CD4-positive, alpha-beta T cell (primary cell): ENCODE measurements at regions of chr6 and their contacts with region 1.

Region 1: DNA sequence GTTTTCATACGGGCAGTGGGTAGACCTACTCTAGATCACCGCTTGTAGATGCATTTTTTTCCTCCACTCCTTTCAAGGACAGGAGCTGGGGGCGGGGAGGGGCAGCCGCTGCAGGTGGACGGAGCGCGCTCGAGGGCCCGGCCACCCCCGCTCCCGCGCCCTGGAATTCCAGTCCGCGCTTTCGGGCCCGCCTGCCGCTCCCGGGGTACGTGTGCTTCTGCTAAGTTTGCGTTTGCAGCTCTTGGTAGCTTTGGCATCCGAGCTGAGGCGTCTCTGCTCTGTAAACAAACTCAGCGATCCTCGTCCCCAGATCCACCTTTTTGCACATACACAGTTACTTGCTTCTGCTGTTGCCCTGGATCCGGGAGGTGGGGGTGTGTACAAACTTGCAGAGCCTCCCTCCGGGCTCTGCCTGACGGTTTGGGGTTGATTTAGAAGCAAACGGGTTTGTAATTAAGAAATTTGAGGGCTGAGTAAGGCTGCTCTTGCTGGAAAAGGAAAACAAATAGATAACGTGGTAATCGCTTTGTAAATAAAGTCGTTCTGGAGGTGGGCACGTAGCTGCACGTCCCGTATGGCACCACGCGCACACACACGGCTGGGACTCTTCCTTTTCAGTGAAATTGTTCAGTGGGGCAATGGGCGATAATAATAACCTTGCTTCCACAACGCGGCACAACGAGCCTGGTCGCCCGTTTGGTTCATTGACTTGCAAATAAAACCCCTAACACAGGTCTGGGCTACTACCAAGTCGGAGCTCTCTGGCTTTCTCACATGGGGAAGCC is 976 bp upstream of the CITED2 start:
- DNase-seq: peak; percentile 72 to 92 (median 80)
- ATAC-seq: peak; percentile 65
- H3K4me3 ChIP-seq: peak overlapping the region; percentile 71
- H3K4me3 Mint-ChIP-seq: peak overlapping the region; percentile 95
- H3K27ac ChIP-seq: peak overlapping the region; percentile 69 to 92
- H3K27ac Mint-ChIP-seq: peak overlapping the region; percentile 97
- H3K4me1 ChIP-seq: peaks cover 16% of the 10 kb centered on the region
- H3K4me1 Mint-ChIP-seq: peaks cover 28% of the 10 kb centered on the region
- H3K27me3 ChIP-seq: no peaks in the 10 kb centered on the region
- H3K27me3 Mint-ChIP-seq: no peaks in the 10 kb centered on the region
- CTCF ChIP-seq: no peak

Region 2: GRCh38 chr6:138372711-138373463 is 1002.5 kb before region 1 on chr6:
- CTCF ChIA-PET with region 1: no interaction called
- POLR2A ChIA-PET with region 1: no interaction called
- intact Hi-C with region 1: no loop called
- DNase-seq: peak in 3 of 14 experiments; percentile 20 to 30 (median 21)
- ATAC-seq: peak; percentile 49
- H3K4me3 ChIP-seq: no peak overlapping the region
- H3K4me3 Mint-ChIP-seq: no peak overlapping the region
- H3K27ac ChIP-seq: no peak overlapping the region
- H3K27ac Mint-ChIP-seq: no peak overlapping the region
- H3K4me1 ChIP-seq: no peaks in the 10 kb centered on the region
- H3K4me1 Mint-ChIP-seq: no peaks in the 10 kb centered on the region
- H3K27me3 ChIP-seq: no peaks in the 10 kb centered on the region
- H3K27me3 Mint-ChIP-seq: peaks cover 15% of the 10 kb centered on the region
- CTCF ChIP-seq: peak; percentile 23

Region 3: GRCh38 chr6:138773177-138774091 is 602.0 kb before region 1 on chr6 and contains the start of gene CCDC28A:
- CTCF ChIA-PET with region 1: interaction called, 3 read pairs
- POLR2A ChIA-PET with region 1: interaction called, 52 read pairs
- intact Hi-C with region 1: loop called (anchors 2 kb)
- DNase-seq: peak; percentile 87 to 97 (median 92)
- ATAC-seq: peak; percentile 84
- H3K4me3 ChIP-seq: peak within 1 kb of the TSS; percentile 85
- H3K4me3 Mint-ChIP-seq: peak within 1 kb of the TSS; percentile 98
- H3K27ac ChIP-seq: peak within 1 kb of the TSS; percentile 93 to 97
- H3K27ac Mint-ChIP-seq: peak within 1 kb of the TSS; percentile 98
- H3K4me1 ChIP-seq: peaks cover 11% of the 10 kb centered on the region
- H3K4me1 Mint-ChIP-seq: peaks cover 39% of the 10 kb centered on the region
- H3K27me3 ChIP-seq: no peaks in the 10 kb centered on the region
- H3K27me3 Mint-ChIP-seq: no peaks in the 10 kb centered on the region
- CTCF ChIP-seq: no peak
- total RNA-seq, gene CCDC28A: 36.9 to 37.2 TPM

Region 4: DNA sequence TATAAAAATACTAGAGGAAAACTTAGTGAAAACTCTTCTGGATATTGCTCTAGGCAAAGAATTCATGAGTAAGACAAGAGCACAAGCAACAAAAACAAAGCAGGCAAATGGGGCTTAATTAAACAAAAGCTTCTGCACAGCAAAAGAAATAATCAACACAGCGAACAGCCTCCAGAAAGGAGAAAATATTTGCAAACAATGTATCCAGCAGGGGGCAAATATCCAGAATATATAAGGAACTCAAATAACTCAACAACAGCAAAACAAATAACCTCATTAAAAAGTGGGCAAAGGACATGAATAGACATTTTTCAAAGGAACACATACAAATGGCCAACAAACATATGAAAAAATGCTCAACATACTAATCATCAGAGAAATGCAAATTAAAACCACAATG is 257.7 kb before region 1 on chr6:
- CTCF ChIA-PET with region 1: no interaction called
- POLR2A ChIA-PET with region 1: interaction called, 63 read pairs
- intact Hi-C with region 1: loop called in 1 of 2 experiments (anchors 5 kb)
- DNase-seq: no peak
- ATAC-seq: no peak
- H3K4me3 ChIP-seq: no peak overlapping the region
- H3K4me3 Mint-ChIP-seq: peak overlapping the region; percentile 13
- H3K27ac ChIP-seq: no peak overlapping the region
- H3K27ac Mint-ChIP-seq: peak overlapping the region; percentile 83
- H3K4me1 ChIP-seq: peaks cover 33% of the 10 kb centered on the region
- H3K4me1 Mint-ChIP-seq: peaks cover 53% of the 10 kb centered on the region
- H3K27me3 ChIP-seq: no peaks in the 10 kb centered on the region
- H3K27me3 Mint-ChIP-seq: no peaks in the 10 kb centered on the region
- CTCF ChIP-seq: no peak

Region 5: GRCh38 chr6:139161817-139162284 is 213.6 kb before region 1 on chr6:
- CTCF ChIA-PET with region 1: no interaction called
- POLR2A ChIA-PET with region 1: interaction called, 37 read pairs
- intact Hi-C with region 1: loop called in 1 of 2 experiments (anchors 5 kb)
- DNase-seq: peak in 13 of 14 experiments; percentile 46 to 84 (median 66)
- ATAC-seq: peak; percentile 55
- H3K4me3 ChIP-seq: peak overlapping the region; percentile 11
- H3K4me3 Mint-ChIP-seq: peak overlapping the region; percentile 76
- H3K27ac ChIP-seq: peak overlapping the region; percentile 32 to 70
- H3K27ac Mint-ChIP-seq: peak overlapping the region; percentile 84
- H3K4me1 ChIP-seq: peaks cover 94% of the 10 kb centered on the region
- H3K4me1 Mint-ChIP-seq: peaks cover 88% of the 10 kb centered on the region
- H3K27me3 ChIP-seq: no peaks in the 10 kb centered on the region
- H3K27me3 Mint-ChIP-seq: no peaks in the 10 kb centered on the region
- CTCF ChIP-seq: no peak

Region 6: GRCh38 chr6:139323511-139324300 is 51.7 kb before region 1 on chr6:
- CTCF ChIA-PET with region 1: interaction called, 3 read pairs
- POLR2A ChIA-PET with region 1: interaction called, 43 read pairs
- intact Hi-C with region 1: no loop called
- DNase-seq: peak; percentile 61 to 92 (median 72)
- ATAC-seq: peak; percentile 86
- H3K4me3 ChIP-seq: peak overlapping the region; percentile 57
- H3K4me3 Mint-ChIP-seq: peak overlapping the region; percentile 93
- H3K27ac ChIP-seq: peak overlapping the region; percentile 91 to 97
- H3K27ac Mint-ChIP-seq: peak overlapping the region; percentile 99
- H3K4me1 ChIP-seq: peaks cover 30% of the 10 kb centered on the region
- H3K4me1 Mint-ChIP-seq: peaks cover 50% of the 10 kb centered on the region
- H3K27me3 ChIP-seq: no peaks in the 10 kb centered on the region
- H3K27me3 Mint-ChIP-seq: no peaks in the 10 kb centered on the region
- CTCF ChIP-seq: no peak

Region 7: GRCh38 chr6:139525415-139525814 is 150.0 kb after region 1 on chr6:
- CTCF ChIA-PET with region 1: no interaction called
- POLR2A ChIA-PET with region 1: interaction called, 19 read pairs
- intact Hi-C with region 1: loop called in 1 of 2 experiments (anchors 5 kb)
- DNase-seq: no peak
- ATAC-seq: no peak
- H3K4me3 ChIP-seq: no peak overlapping the region
- H3K4me3 Mint-ChIP-seq: no peak overlapping the region
- H3K27ac ChIP-seq: no peak overlapping the region
- H3K27ac Mint-ChIP-seq: no peak overlapping the region
- H3K4me1 ChIP-seq: peaks cover 5% of the 10 kb centered on the region
- H3K4me1 Mint-ChIP-seq: peaks cover 1% of the 10 kb centered on the region
- H3K27me3 ChIP-seq: no peaks in the 10 kb centered on the region
- H3K27me3 Mint-ChIP-seq: no peaks in the 10 kb centered on the region
- CTCF ChIP-seq: no peak

Region 8: DNA sequence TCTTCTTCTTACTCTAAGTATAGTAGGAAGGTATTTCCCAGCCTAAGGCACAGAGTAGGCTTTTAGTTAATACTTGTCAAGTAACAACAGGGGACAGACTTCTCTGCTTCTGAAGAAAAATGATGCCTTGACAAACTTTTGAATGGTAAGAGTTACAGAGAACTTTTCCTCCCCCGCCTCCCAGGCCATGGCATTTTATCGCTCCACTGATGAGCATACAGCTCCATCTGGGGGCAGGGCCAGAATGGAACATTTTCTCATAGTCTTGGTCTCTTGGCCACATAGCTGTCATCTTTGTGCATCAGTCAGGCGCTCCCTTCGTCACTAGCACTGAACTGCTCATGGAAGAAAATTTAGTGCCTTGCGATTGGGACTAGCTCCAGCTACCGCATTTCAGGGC is 1065.8 kb after region 1 on chr6:
- CTCF ChIA-PET with region 1: no interaction called
- POLR2A ChIA-PET with region 1: no interaction called
- intact Hi-C with region 1: loop called in 1 of 2 experiments (anchors 10 kb)
- DNase-seq: peak in 4 of 14 experiments; percentile 2 to 8 (median 6)
- ATAC-seq: no peak
- H3K4me3 ChIP-seq: no peak overlapping the region
- H3K4me3 Mint-ChIP-seq: no peak overlapping the region
- H3K27ac ChIP-seq: no peak overlapping the region
- H3K27ac Mint-ChIP-seq: no peak overlapping the region
- H3K4me1 ChIP-seq: no peaks in the 10 kb centered on the region
- H3K4me1 Mint-ChIP-seq: no peaks in the 10 kb centered on the region
- H3K27me3 ChIP-seq: no peaks in the 10 kb centered on the region
- H3K27me3 Mint-ChIP-seq: no peaks in the 10 kb centered on the region
- CTCF ChIP-seq: no peak